ENCODE measurements at regions of chr3 and their contacts with region 1.

Region 1: GRCh38 chr3:114632757-114633424 is 339.1 kb downstream of the TIGIT start:
- DNase-seq: peak; percentile 52
- H3K4me3 Mint-ChIP-seq: no peak overlapping the region
- H3K27ac Mint-ChIP-seq: peak overlapping the region; percentile 64
- H3K4me1 Mint-ChIP-seq: peaks cover 10% of the 10 kb centered on the region
- H3K27me3 Mint-ChIP-seq: no peaks in the 10 kb centered on the region

Region 2: GRCh38 chr3:114504941-114505632 is 127.8 kb before region 1 on chr3:
- CTCF ChIA-PET with region 1: no interaction called
- POLR2A ChIA-PET with region 1: no interaction called
- intact Hi-C with region 1: loop called (anchors 5 kb)
- DNase-seq: no peak
- H3K4me3 Mint-ChIP-seq: no peak overlapping the region
- H3K27ac Mint-ChIP-seq: no peak overlapping the region
- H3K4me1 Mint-ChIP-seq: peaks cover 31% of the 10 kb centered on the region
- H3K27me3 Mint-ChIP-seq: peaks cover 14% of the 10 kb centered on the region

Region 3: GRCh38 chr3:114590309-114591047 is 42.4 kb before region 1 on chr3:
- CTCF ChIA-PET with region 1: no interaction called
- POLR2A ChIA-PET with region 1: interaction called, 3 read pairs
- intact Hi-C with region 1: loop called (anchors 1 kb)
- DNase-seq: no peak
- H3K4me3 Mint-ChIP-seq: no peak overlapping the region
- H3K27ac Mint-ChIP-seq: no peak overlapping the region
- H3K4me1 Mint-ChIP-seq: peaks cover 13% of the 10 kb centered on the region
- H3K27me3 Mint-ChIP-seq: no peaks in the 10 kb centered on the region

Measured in activated CD4-positive, alpha-beta memory T cell treated with anti-CD3 and anti-CD28 coated beads for 36 hours (primary cell).